ENCODE measurements at regions of chr2 and their contacts with region 1.

Region 1: DNA sequence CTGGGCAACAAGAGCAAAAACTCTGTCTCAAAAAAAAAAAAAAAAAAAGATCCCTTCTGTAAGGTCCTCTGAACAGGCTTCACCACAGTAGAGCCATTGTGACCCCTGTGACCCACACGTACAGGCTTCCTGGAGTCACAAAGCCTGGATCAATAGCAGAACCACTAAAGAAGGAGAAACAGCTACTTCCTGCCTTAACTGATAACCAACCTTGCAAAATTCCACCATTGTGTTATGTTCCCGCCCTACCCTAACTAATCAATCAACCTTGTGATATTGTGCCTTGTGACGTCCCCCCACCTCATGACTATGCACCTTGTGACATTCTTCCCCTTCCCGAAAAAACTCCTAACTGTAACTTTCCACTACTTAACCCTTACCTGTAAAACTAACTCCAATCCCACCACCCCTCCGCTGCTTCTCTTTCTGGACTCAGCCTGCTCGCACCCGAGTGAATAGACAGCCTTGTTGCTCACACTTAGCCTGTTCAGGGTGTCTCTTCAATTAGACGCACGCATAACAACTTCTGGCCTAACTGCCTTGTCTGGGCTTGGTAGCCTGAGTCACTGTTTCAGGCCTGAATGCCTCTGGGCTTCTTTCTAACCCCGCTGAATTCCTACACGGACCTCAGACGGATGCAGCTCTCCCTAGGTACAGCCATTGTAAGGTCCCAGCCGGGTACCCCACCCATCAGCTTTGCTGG is 13.9 kb downstream of the SCYGR8 start:
- DNase-seq: no peak
- ATAC-seq: no peak
- H3K4me3 ChIP-seq: no peak overlapping the region
- H3K4me3 Mint-ChIP-seq: no peak overlapping the region
- H3K27ac ChIP-seq: no peak overlapping the region
- H3K27ac Mint-ChIP-seq: no peak overlapping the region
- H3K4me1 ChIP-seq: no peaks in the 10 kb centered on the region
- H3K4me1 Mint-ChIP-seq: no peaks in the 10 kb centered on the region
- H3K27me3 ChIP-seq: no peaks in the 10 kb centered on the region
- H3K27me3 Mint-ChIP-seq: no peaks in the 10 kb centered on the region
- CTCF ChIP-seq: no peak

Region 2: DNA sequence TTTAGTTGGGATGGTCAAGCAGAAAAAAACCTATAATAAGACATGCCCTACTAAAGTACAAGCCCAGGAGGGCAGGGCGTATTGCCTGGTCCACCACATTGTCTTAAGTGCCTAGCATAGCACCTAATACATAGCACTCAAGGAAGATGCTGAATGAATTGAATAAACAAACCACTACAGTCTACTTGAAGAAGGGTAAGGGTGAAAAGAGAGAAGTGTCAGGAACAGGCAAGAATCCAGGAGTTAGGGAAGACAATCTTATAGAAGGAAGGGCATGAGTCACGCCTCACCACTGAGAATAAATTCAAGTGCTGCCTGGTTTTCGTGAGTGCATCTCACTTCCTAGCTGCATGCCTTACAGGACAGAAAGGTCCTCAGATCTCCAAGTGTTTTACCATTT is 55.6 kb before region 1 on chr2:
- intact Hi-C with region 1: loop called (anchors 2 kb)
- DNase-seq: no peak
- ATAC-seq: no peak
- H3K4me3 ChIP-seq: no peak overlapping the region
- H3K4me3 Mint-ChIP-seq: no peak overlapping the region
- H3K27ac ChIP-seq: no peak overlapping the region
- H3K27ac Mint-ChIP-seq: no peak overlapping the region
- H3K4me1 ChIP-seq: no peaks in the 10 kb centered on the region
- H3K4me1 Mint-ChIP-seq: no peaks in the 10 kb centered on the region
- H3K27me3 ChIP-seq: no peaks in the 10 kb centered on the region
- H3K27me3 Mint-ChIP-seq: peaks cover 0 to 2% of the 10 kb centered on the region in 2 donors
- CTCF ChIP-seq: no peak

Measured in natural killer cell (primary cell).